Ovary (tissue), 10 donors: ENCODE measurements at regions of chr4 and their contacts with region 1.

Region 1: DNA sequence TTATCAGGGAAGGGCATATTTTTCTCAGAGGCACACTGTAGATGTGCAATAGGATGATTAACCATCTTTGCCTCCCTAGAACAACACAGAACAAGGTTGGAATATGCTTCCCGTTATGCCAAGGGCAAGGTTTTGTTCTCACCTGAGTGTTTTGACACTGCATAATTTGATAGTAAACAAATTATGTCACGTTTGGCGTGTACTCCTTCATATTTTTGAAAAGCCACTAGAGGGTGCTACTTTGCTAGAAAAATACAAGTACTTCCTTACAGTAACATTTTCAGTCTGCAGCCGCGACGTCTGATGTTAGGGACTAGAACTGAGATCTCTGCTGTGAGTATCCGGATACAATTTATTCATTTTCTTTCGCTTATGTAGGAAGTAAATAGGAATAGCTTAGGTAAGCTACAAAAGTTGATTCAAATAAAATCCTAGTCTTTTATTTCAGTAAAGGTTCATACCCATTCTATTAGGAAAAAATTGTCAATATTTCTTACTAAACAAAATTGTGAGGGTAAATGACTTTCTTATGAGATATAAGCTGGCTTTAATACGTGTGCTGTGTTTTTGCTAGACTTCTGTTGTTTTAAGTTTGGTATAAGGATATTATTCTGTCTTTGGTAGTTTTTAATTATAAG is 181.1 kb upstream of the WDFY3 start:
- DNase-seq: peak in 4 of 5 donors; percentile 18 to 49 (median 38)
- H3K4me3 ChIP-seq: no peak overlapping the region
- H3K27ac ChIP-seq: no peak overlapping the region
- H3K4me1 ChIP-seq: no peaks in the 10 kb centered on the region
- H3K27me3 ChIP-seq: no peaks in the 10 kb centered on the region
- CTCF ChIP-seq: peak; percentile 33 to 57 (median 42)
- EP300 ChIP-seq: no peak
- POLR2A ChIP-seq: no peak

Region 2: GRCh38 chr4:84971319-84971932 is 176.1 kb before region 1 on chr4:
- intact Hi-C with region 1: no loop called
- DNase-seq: no peak
- H3K4me3 ChIP-seq: no peak overlapping the region
- H3K27ac ChIP-seq: no peak overlapping the region
- H3K4me1 ChIP-seq: no peaks in the 10 kb centered on the region
- H3K27me3 ChIP-seq: no peaks in the 10 kb centered on the region
- CTCF ChIP-seq: peak; percentile 38 to 62 (median 44)
- EP300 ChIP-seq: no peak
- POLR2A ChIP-seq: no peak

Region 3: GRCh38 chr4:85243857-85244256 is 96.3 kb after region 1 on chr4:
- intact Hi-C with region 1: no loop called
- DNase-seq: no peak
- H3K4me3 ChIP-seq: no peak overlapping the region
- H3K27ac ChIP-seq: no peak overlapping the region
- H3K4me1 ChIP-seq: no peaks in the 10 kb centered on the region
- H3K27me3 ChIP-seq: no peaks in the 10 kb centered on the region
- CTCF ChIP-seq: no peak
- EP300 ChIP-seq: no peak
- POLR2A ChIP-seq: no peak

Region 4: DNA sequence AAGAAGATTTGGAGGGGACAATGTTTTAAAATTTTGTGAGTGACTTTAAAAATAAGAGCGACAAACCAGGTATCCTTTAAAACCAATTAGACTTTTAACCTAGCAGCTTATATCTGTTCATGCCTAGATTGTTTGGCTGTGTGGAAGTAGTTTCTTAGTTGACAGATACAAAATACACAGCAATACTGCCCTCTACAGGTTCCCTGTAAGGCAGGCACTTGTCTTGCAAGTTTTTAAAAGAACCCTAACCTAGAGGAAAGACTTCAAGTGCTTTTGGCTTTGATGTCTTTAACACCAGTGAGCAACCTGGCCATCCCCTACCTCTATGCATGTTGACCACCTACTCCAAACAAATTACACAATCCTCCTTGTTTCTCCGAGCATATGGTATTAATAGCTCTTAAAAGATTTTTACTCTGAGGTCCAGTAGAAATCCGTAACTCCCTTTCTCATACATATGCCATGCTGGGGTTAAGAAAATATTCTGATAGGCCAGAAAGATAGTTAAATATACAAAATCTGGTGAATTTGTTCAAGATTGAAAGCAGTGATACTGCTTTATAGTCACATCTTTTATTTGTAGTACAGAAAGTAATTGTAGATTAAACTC is 600.4 kb after region 1 on chr4:
- intact Hi-C with region 1: loop called in 2 of 4 experiments (anchors 5 to 10 kb)
- DNase-seq: peak in 1 of 5 donors; percentile 50
- H3K4me3 ChIP-seq: no peak overlapping the region
- H3K27ac ChIP-seq: no peak overlapping the region
- H3K4me1 ChIP-seq: no peaks in the 10 kb centered on the region
- H3K27me3 ChIP-seq: no peaks in the 10 kb centered on the region
- CTCF ChIP-seq: peak; percentile 49 to 60 (median 52)
- EP300 ChIP-seq: no peak
- POLR2A ChIP-seq: no peak

Region 5: DNA sequence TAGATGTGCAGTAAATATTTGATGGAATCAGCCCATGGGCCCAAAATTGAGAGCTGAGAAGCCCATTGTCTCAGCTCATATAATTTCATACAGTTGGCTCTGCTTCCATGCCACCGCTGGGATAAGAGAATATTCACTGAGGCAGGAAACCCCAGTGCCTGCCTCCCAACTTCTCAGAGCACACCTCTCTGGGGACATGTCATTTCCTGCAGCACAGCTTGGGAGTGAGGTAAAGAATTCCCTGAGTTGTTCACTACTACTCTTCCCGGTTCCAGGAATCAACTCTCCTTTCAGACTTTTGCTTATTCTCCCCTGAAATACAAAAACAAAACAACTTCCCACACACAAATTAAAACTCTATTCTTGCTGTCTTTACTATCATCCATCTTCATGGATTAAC is 823.0 kb after region 1 on chr4:
- intact Hi-C with region 1: loop called in 2 of 4 experiments (anchors 5 to 10 kb)
- DNase-seq: no peak
- H3K4me3 ChIP-seq: no peak overlapping the region
- H3K27ac ChIP-seq: no peak overlapping the region
- H3K4me1 ChIP-seq: no peaks in the 10 kb centered on the region
- H3K27me3 ChIP-seq: no peaks in the 10 kb centered on the region
- CTCF ChIP-seq: no peak
- EP300 ChIP-seq: no peak
- POLR2A ChIP-seq: no peak

Region 6: DNA sequence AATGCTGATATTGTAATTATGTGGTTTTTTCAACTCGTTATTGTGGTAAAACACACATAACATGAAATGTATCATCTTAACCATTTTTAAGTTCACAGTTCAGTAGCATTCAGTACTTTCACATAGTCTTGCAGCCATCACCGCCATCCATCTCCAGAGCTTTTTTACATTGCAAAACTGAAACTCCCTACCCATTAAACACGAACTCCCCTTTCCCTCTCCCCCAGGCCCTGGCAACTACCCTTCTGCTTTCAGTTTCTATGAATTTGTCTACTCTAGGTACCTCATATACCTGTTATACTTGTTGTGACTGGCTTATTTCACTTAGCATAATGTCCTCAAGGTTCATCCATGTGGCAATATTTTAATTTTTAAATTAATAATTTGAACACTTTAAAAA is 831.7 kb after region 1 on chr4:
- intact Hi-C with region 1: loop called in 2 of 4 experiments (anchors 5 to 10 kb)
- DNase-seq: no peak
- H3K4me3 ChIP-seq: no peak overlapping the region
- H3K27ac ChIP-seq: no peak overlapping the region
- H3K4me1 ChIP-seq: no peaks in the 10 kb centered on the region
- H3K27me3 ChIP-seq: no peaks in the 10 kb centered on the region
- CTCF ChIP-seq: no peak
- EP300 ChIP-seq: no peak
- POLR2A ChIP-seq: no peak